ENCODE measurements at regions of chr9 and their contacts with region 1.

Region 1: GRCh38 chr9:15135164-15135792 is 171.7 kb downstream of the TTC39B start:
- DNase-seq: peak; percentile 82
- H3K4me3 ChIP-seq: no peak overlapping the region
- H3K27ac ChIP-seq: no peak overlapping the region
- H3K4me1 ChIP-seq: no peaks in the 10 kb centered on the region
- H3K27me3 ChIP-seq: no peaks in the 10 kb centered on the region
- CTCF ChIP-seq: peak; percentile 79 to 91
- POLR2A ChIP-seq: no peak

Region 2: DNA sequence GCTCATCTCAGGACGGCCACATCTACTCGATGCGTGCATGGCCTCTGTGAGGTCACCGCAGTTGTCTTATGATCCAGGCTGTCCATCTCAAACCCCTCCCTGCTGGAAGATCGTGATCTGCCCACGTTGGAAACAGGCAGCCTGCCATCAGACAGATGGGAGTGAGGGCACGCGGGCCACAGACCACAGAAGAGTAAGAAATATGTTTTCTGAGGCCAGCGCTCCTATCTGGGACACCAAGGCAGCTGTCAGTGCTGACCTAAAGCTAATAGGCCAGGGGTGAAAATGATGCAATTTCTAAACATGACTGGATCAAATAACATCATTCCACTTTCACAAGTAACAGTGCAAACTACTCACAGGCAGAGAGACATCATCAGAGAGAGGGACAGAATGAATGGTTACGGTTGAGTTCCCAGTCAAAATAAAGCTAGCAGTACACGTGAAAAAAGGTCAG is 355.7 kb before region 1 on chr9:
- CTCF ChIA-PET with region 1: interaction called, 4 read pairs
- POLR2A ChIA-PET with region 1: no interaction called
- dilution Hi-C with region 1: no loop called
- intact Hi-C with region 1: loop called (anchors 5 kb)
- DNase-seq: no peak
- H3K4me3 ChIP-seq: no peak overlapping the region
- H3K27ac ChIP-seq: no peak overlapping the region
- H3K4me1 ChIP-seq: no peaks in the 10 kb centered on the region
- H3K27me3 ChIP-seq: peaks cover 3 to 5% of the 10 kb centered on the region in 2 experiments
- CTCF ChIP-seq: no peak
- POLR2A ChIP-seq: no peak

Region 3: GRCh38 chr9:14846871-14847311 is 288.4 kb before region 1 on chr9:
- CTCF ChIA-PET with region 1: interaction called, 7 read pairs
- POLR2A ChIA-PET with region 1: no interaction called
- dilution Hi-C with region 1: no loop called
- intact Hi-C with region 1: loop called (anchors 1 kb)
- DNase-seq: peak; percentile 28
- H3K4me3 ChIP-seq: no peak overlapping the region
- H3K27ac ChIP-seq: no peak overlapping the region
- H3K4me1 ChIP-seq: no peaks in the 10 kb centered on the region
- H3K27me3 ChIP-seq: peaks cover 6 to 14% of the 10 kb centered on the region in 2 experiments
- CTCF ChIP-seq: peak; percentile 77 to 80
- POLR2A ChIP-seq: no peak

Region 4: GRCh38 chr9:14993061-14993800 is 142.0 kb before region 1 on chr9:
- CTCF ChIA-PET with region 1: no interaction called
- POLR2A ChIA-PET with region 1: no interaction called
- dilution Hi-C with region 1: no loop called
- intact Hi-C with region 1: loop called (anchors 10 kb)
- DNase-seq: peak; percentile 84
- H3K4me3 ChIP-seq: peak overlapping the region; percentile 33 to 69 (median 45)
- H3K27ac ChIP-seq: peak overlapping the region; percentile 88
- H3K4me1 ChIP-seq: peaks cover 15% of the 10 kb centered on the region
- H3K27me3 ChIP-seq: no peaks in the 10 kb centered on the region
- CTCF ChIP-seq: no peak
- POLR2A ChIP-seq: peak; percentile 62

Region 5: GRCh38 chr9:15073620-15074019 is 61.7 kb before region 1 on chr9:
- CTCF ChIA-PET with region 1: no interaction called
- POLR2A ChIA-PET with region 1: no interaction called
- dilution Hi-C with region 1: no loop called
- intact Hi-C with region 1: no loop called
- DNase-seq: no peak
- H3K4me3 ChIP-seq: no peak overlapping the region
- H3K27ac ChIP-seq: no peak overlapping the region
- H3K4me1 ChIP-seq: peaks cover 26% of the 10 kb centered on the region
- H3K27me3 ChIP-seq: no peaks in the 10 kb centered on the region
- CTCF ChIP-seq: no peak
- POLR2A ChIP-seq: no peak

Region 6: DNA sequence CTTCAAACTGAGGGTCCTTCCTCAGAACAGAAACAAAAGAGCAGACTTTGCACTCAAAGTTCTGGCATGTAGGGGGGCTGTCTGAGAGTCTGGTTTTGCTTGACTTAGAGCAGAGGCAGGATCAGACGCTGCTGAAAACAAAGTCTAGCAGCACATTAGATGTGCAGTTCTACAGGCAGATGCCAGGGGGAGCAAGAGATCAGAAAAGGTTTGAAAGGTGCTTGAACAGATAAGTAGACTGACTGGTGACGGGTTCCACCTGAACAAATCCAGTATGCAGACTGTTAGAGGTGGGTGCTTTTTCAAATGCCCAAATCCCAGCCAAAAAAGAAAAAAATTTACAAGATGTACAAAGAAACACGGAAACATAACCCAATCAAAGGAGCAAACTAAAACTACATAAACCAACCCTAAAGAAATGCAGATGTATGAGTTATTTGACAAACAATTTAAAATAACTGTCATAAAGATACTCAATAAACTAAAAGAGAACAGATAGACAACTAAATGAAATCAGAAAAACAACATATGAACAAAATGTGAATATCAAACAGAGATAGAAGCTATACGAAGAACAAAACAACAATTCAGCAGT is 30.4 kb before region 1 on chr9:
- CTCF ChIA-PET with region 1: interaction called, 120 read pairs
- POLR2A ChIA-PET with region 1: no interaction called
- dilution Hi-C with region 1: no loop called
- intact Hi-C with region 1: loop called (anchors 1 kb)
- DNase-seq: peak; percentile 51
- H3K4me3 ChIP-seq: no peak overlapping the region
- H3K27ac ChIP-seq: no peak overlapping the region
- H3K4me1 ChIP-seq: no peaks in the 10 kb centered on the region
- H3K27me3 ChIP-seq: peaks cover 3 to 6% of the 10 kb centered on the region in 2 experiments
- CTCF ChIP-seq: peak; percentile 66 to 72
- POLR2A ChIP-seq: no peak

Measured in endothelial cell of umbilical vein (primary cell).